Right cardiac atrium (tissue), 5 donors: ENCODE measurements at regions of chr3 and their contacts with region 1.

Region 1: GRCh38 chr3:22960105-22960984 is 242.8 kb upstream of the UBE2E2 start:
- DNase-seq: peak in 2 of 3 donors; percentile 35 to 67
- ATAC-seq: no peak
- H3K4me3 ChIP-seq: no peak overlapping the region
- H3K27ac ChIP-seq: no peak overlapping the region
- H3K4me1 ChIP-seq: no peaks in the 10 kb centered on the region
- H3K27me3 ChIP-seq: no peaks in the 10 kb centered on the region

Region 2: DNA sequence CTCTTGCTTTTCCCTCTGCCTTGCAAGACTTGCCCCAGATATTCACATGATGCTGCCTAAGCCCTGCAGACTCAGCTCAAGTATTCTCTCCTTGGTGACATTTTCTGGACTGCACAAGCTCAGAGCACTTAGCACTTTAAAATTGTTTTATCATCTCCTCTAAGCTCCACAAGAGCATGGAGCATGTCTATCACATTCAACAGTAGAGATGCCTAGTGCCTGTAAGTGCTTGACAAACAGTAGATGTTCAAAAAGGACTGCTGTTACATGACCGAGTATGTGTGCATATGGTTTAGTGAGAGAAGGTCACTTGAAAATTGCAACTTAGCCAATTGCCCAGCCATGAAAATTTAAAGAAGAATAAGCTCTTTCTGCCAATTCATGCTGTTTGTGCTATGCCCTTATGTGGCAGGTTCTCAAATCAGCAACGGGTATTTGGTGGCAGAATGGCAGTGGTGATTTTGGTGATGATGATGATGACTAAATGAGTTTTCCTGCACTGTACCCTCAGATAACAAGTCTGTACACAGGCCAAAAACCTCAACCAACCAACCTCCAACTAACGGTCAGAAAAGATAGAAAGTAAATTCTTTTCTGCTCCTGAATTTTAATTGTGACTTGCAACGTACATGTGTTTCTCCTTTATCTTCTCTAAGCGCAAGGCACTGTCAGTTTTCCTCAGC is 404.5 kb before region 1 on chr3:
- intact Hi-C with region 1: loop called in 2 of 4 experiments (anchors 5 to 10 kb)
- DNase-seq: no peak
- ATAC-seq: no peak
- H3K4me3 ChIP-seq: no peak overlapping the region
- H3K27ac ChIP-seq: no peak overlapping the region
- H3K4me1 ChIP-seq: no peaks in the 10 kb centered on the region
- H3K27me3 ChIP-seq: no peaks in the 10 kb centered on the region

Region 3: DNA sequence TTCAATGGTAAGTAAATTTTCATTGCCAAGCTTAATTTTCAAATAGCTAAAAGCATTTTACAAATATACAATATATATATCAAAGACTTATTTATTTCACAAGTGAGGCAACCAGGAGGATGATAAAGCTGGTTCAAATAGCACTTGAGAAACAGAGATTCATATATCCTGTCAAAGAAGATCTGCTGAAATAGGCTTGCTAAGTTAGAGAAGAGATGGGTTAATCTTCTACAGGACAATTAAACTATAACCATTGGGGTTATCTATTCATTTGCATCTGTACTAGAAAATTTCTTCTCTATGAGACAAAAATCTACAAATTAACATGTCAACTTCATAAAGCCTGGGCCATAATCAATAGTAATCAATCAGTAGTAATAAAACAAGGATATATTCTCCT is 395.0 kb before region 1 on chr3:
- intact Hi-C with region 1: loop called in 2 of 4 experiments (anchors 5 to 10 kb)
- DNase-seq: no peak
- ATAC-seq: no peak
- H3K4me3 ChIP-seq: no peak overlapping the region
- H3K27ac ChIP-seq: no peak overlapping the region
- H3K4me1 ChIP-seq: no peaks in the 10 kb centered on the region
- H3K27me3 ChIP-seq: no peaks in the 10 kb centered on the region